ENCODE measurements at regions of chr3 and their contacts with region 1.

Region 1: DNA sequence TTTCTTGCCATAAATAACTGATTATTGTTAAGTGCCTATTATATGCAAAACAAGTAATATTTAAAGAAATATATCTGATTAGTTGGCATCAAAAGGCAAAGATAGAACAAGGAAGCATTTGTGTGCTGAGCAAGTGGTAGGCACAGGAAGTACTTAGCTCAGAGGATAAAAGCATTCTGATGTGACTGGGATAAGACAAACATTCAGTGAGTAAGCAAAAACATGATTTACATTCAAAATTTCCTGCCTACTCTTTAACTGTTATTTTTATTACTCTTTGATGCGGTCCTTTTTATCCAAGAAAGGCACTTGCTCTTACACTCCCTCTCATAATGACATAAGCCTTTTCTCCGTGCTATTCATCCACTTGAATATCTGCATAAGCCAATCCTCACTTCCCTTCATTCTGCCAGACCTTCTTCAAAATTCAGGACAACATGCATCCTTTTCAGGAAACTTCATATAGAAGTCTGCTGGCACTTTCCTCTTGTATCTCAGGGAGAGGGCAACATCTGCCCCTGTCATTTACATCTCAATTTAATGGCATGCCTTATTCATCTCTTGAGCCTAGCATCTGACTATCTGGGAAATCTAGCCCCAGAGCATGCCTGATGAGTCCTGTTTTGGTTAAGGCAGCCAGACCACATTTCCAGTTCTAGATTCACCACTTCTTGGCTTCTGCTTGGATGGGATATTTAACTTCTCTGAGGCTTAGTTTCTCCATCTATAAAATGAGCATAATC is 478.2 kb upstream of the ROBO2 start:
- DNase-seq: no peak
- ATAC-seq: no peak

Region 2: GRCh38 chr3:76369178-76369577 is 192.5 kb before region 1 on chr3:
- intact Hi-C with region 1: loop called (anchors 10 kb)
- DNase-seq: no peak
- ATAC-seq: peak; percentile 41

Region 3: GRCh38 chr3:76429581-76430177 is 132.0 kb before region 1 on chr3:
- intact Hi-C with region 1: no loop called
- DNase-seq: no peak
- ATAC-seq: no peak